Left cardiac atrium (tissue), 4 donors: ENCODE measurements at regions of chr5 and their contacts with region 1.

Region 1: DNA sequence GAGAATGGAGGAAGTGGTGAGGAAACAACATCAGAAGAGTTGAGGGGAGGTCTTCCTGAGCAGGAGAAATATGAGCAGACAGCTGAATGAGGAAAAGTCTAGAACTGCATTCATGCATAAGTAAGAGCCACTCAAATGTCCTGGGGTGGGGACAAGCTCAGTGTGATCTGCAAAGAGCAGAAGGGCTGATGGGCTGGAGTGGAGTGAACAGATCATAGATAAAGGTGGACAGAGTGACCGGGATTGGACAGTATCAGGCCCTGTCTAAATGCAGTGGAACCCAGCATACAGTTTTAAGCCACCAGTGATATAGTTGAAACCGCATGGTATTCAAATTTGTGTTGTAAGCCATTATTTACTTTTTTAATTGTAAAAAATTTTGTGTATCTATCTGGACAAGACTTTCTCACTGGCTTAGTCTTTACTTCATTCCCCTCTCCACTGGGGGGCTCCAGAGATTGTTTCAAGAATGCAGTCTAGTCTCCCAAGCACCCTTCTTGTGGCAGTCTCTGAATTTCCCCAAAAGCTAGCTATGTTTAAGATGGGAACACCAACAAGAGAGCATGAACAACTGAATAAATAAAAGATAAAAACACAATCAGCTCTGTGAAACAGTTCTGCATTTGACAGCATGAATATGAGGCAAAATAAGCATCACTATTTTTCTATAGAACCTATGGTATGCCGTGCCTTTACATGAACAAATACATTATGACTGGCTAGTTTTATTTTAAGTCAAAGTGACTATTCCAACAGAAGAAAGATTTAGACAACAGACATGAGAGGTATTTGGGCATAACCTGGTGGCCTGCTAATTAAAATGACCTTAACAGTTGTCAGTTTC is 10.7 kb upstream of the STK32A start:
- DNase-seq: peak; percentile 29
- ATAC-seq: peak; percentile 78 to 81

Region 2: GRCh38 chr5:147369742-147370374 is 145.7 kb after region 1 on chr5:
- intact Hi-C with region 1: loop called (anchors 2 to 5 kb)
- DNase-seq: no peak
- ATAC-seq: no peak

Region 3: DNA sequence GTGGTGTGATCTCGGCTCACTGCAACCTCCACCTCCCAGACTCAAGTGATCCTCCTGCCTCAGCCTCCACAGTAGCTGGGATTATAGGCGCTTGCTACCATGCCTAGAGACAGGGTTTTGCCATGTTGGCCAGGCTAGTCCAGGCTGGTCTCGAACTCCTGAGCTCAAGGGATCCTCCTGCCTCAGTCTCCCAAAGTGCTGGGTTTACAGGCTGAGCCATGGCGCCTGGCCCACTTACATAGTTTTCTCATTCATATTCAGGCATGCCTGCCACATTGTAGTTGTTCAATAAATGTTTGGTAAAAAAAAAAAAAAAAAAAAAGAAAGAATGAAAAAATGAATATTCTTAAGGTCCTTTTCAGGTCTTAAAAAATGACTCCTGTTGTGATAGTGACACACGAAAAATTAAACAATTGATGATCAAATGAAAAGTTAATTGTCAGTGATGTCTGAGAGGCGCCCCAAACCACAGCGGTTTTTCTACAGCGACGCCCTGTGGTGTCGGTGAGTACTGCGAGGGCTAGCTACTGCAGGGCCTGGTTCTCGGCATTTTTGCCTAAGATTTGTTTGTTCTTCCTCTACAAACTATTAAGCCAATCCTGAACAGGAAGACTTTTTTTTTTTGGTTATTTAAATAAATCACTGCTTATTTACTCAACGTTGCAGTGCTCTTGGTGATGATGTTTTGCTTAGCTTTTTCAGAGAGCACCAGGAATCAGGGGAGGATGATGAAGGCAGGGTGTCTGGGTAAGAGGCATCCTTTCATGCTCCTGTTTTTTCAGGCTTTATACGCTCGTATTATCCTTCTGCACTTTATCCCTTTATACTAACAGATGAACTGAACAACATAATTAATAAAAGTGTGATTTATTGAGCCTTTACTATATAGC is 352.7 kb after region 1 on chr5:
- intact Hi-C with region 1: loop called in 1 of 2 experiments (anchors 5 kb)
- DNase-seq: peak; percentile 53
- ATAC-seq: peak; percentile 53 to 79